ENCODE measurements at regions of chr1 and their contacts with region 1.

Region 1: GRCh38 chr1:21090463-21090862 is 86.2 kb downstream of the EIF4G3 start:
- DNase-seq: peak; percentile 23
- H3K4me3 ChIP-seq: peak overlapping the region in 1 of 3 experiments; percentile 19
- H3K27ac ChIP-seq: peak overlapping the region; percentile 43
- H3K4me1 ChIP-seq: peaks cover 16% of the 10 kb centered on the region
- H3K27me3 ChIP-seq: no peaks in the 10 kb centered on the region
- CTCF ChIP-seq: no peak
- POLR2A ChIP-seq: no peak

Region 2: DNA sequence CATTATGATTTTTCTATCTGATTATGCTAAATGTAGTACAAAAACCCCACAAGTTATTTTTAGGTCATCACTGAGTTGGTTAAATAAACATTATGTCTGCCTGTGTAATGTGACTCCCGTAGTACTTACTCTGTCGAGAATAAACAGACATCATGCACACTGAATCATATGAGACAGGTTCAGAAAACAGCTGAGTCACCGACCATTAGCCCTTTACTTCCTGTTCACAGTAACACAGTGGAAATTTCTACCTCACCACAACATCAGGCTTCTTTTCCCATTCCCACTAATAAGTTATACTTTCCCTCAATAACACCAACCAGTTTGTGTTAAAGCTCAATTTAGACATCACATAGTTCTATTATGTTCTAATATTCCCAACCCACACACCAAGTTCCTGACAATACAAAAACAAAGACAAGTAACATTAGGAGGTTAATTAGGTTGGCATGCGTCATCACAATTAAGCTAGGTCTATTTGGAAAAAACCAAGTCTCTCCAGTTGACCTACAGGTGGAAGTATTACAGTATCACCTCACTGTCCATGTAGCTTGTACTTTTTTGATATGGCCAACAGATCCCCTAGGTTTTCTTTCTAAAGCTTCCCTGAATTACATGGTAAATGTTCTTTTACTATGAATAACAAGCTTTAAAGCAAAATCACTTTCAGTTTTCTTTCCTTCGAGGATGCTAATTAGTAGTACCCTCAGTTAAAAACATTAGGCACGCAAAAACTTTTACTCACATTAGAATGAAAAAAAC is 68.0 kb before region 1 on chr1:
- CTCF ChIA-PET with region 1: no interaction called
- POLR2A ChIA-PET with region 1: no interaction called
- dilution Hi-C with region 1: no loop called
- intact Hi-C with region 1: loop called (anchors 5 kb)
- DNase-seq: peak; percentile 99
- H3K4me3 ChIP-seq: peak overlapping the region in 1 of 3 experiments; percentile 40
- H3K27ac ChIP-seq: peak overlapping the region; percentile 98
- H3K4me1 ChIP-seq: peaks cover 15% of the 10 kb centered on the region
- H3K27me3 ChIP-seq: no peaks in the 10 kb centered on the region
- CTCF ChIP-seq: no peak
- POLR2A ChIP-seq: no peak

Region 3: DNA sequence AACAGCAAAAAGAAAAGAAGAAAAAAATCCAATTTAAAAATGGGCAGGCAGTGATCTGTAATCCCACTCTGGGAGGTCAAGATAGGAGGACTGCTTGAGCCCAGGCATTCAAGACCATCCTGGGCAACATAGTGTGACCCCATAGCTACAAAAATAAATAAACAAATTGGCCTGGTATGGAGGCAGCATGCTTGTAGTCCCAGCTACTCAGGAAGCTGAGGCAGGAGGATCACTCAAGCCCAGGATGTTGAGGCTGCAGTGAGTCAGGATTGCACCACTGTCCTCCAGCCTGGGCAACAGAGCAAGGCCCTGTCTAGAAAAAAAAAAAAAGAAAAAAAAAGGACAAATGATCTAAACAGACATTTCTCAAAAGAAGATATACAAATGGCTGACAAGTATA is 13.4 kb before region 1 on chr1:
- CTCF ChIA-PET with region 1: interaction called, 4 read pairs
- POLR2A ChIA-PET with region 1: no interaction called
- dilution Hi-C with region 1: no loop called
- intact Hi-C with region 1: loop called (anchors 1 kb)
- DNase-seq: peak; percentile 77
- H3K4me3 ChIP-seq: no peak overlapping the region
- H3K27ac ChIP-seq: peak overlapping the region; percentile 8
- H3K4me1 ChIP-seq: peaks cover 16% of the 10 kb centered on the region
- H3K27me3 ChIP-seq: no peaks in the 10 kb centered on the region
- CTCF ChIP-seq: no peak
- POLR2A ChIP-seq: no peak

Region 4: DNA sequence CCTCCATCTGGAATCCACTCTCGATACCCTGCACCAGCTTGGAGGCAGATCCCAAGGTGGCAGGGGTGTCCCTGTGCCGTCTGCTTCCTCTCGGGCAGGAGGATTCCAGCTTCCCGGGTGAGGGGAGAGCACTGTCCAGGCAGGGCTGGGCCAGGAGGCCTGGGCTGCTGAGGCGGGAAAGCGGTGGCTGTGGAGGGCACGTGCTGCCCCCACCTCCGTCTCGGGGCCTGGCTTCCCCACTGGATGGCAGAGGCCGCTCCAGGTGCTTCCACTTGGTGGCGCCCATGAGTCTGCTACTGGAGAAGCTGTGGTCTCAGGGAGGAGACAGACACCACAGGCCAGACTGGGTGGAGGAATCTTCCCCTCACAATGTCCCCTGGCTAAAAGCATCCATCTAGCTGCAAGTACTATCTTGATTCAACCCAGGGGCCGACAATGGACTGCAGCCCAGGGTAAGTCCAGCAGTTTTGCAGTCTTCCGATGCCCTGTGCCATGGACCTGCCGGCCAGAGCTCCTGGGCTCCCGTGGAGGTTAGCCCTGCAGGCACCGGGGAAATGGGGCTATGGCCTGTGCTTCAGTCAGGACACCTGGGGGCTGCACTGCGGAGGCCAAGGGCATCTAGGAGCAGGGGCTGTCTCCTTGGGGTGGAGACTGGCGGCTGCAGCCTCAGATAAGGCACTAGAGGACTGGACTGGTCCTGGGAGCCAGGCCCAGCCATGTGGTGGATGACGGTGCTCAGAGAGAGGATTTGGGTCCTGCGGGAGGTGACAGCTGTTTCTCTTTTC is 127.5 kb after region 1 on chr1:
- CTCF ChIA-PET with region 1: no interaction called
- POLR2A ChIA-PET with region 1: no interaction called
- dilution Hi-C with region 1: no loop called
- intact Hi-C with region 1: no loop called
- DNase-seq: peak; percentile 42
- H3K4me3 ChIP-seq: no peak overlapping the region
- H3K27ac ChIP-seq: no peak overlapping the region
- H3K4me1 ChIP-seq: peaks cover 6% of the 10 kb centered on the region
- H3K27me3 ChIP-seq: no peaks in the 10 kb centered on the region
- CTCF ChIP-seq: peak; percentile 47 to 66
- POLR2A ChIP-seq: peak; percentile 44